Head of caudate nucleus (tissue), 42 donors: ENCODE measurements at regions of chr17 and their contacts with region 1.

Region 1: GRCh38 chr17:34980681-34981537 is 597 bp downstream of the LIG3 start:
- DNase-seq: peak; percentile 26 to 91 (median 80)

Region 2: DNA sequence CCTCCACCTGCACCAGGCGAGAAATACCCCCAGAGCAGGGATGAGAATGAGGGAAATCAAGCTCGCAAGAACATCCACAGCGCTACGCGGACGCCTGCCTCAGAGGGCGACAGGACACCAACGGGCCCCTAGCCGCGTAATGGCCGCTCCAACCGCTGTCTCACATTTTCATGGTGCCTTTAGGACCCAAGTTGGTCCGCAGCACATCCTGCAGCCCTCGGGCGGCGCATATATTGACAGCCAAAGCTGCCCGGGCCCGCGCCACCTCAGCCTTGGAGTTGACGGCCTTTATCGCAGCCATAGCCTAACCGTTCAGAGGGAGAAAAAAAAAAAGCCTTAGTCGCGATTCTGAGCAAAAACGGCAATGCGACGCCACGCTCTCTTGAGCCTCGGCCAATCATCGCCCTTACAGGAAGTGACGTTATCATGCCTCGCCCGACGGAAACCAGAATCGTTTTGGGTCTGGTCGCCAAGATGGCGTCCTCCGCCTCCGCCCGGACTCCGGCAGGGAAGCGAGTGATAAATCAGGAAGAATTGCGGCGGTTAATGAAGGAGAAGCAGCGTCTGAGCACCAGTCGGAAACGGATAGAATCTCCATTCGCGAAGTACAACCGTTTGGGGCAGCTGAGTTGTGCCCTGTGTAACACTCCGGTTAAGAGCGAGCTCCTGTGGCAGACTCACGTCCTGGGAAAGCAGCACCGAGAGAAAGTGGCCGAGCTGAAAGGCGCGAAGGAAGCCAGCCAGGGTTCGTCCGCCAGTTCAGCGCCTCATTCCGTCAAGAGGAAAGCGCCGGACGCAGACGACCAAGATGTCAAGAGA is 19.6 kb before region 1 on chr17 and contains the starts of genes CCT6B and ZNF830:
- intact Hi-C with region 1: loop called (anchors 2 kb)
- DNase-seq: peak; percentile 82 to 98 (median 92)

Region 3: DNA sequence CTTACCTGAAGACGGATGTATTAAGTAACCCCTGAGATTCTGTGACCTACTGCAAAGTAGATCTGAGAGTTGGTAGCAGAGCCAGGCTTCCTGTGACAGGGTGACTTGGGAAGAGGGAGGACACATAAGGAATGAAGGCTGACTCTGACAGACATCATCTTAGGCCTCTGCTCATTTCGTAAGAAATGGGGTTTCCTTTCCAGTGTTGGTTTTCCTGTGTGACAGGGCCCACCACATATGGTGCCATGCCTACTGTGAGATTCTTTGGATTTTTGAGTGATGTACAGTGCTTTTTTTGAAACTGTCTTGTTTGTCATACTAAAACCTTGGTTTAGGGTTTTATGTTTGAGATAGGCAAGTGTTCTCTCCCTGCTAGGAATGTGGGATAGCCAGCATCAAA is 12.1 kb after region 1 on chr17:
- intact Hi-C with region 1: loop called (anchors 1 kb)
- DNase-seq: no peak

Region 4: GRCh38 chr17:35088881-35089585 is 108.1 kb after region 1 on chr17:
- intact Hi-C with region 1: loop called (anchors 5 kb)
- DNase-seq: peak; percentile 64 to 96 (median 90)